ENCODE measurements at regions of chr17 and their contacts with region 1.

Region 1: DNA sequence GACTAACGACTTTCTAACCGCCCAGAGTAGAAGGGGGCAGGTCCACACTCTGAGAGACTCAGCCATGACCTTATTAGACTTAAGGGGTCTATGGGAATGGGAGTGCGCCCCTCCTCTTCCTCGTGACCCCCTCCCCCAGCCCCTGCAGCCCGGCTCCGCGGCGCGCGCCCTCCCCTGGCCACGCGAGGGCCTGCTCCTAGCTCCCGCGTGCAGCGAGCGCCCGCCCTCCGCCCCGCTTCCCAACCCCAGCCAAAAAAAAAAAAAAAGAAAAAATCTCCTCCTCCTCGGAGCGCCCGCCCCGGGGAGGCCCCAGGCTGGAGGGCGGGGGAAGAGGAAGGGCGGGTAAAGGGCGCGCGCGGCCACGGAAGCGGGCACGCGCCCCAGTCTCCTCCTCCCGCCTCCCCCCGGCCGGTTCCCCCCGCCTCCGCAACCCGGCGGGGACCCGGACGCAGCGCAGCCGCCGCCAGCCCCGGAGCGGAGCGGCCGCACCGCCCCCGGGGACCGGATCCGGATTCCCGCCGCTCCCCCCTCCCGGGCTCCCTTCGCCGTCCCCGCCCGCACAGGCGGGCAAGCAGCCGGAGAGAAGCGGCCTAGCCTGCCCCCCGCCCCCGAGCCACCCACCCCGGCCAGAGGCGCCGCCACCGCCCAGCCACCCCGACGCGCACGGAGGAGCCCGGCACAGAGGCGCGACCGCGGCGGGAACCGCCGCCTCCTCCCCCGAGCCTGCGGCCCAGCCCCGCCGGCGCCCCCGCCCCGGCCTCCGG is 949 bp downstream of the UBTF start:
- DNase-seq: peak; percentile 77 to 97
- H3K4me3 ChIP-seq: peak overlapping the region; percentile 92
- CTCF ChIP-seq: peak in 1 of 3 donors; percentile 13
- POLR2A ChIP-seq: peak in 1 of 2 donors; percentile 59

Region 2: DNA sequence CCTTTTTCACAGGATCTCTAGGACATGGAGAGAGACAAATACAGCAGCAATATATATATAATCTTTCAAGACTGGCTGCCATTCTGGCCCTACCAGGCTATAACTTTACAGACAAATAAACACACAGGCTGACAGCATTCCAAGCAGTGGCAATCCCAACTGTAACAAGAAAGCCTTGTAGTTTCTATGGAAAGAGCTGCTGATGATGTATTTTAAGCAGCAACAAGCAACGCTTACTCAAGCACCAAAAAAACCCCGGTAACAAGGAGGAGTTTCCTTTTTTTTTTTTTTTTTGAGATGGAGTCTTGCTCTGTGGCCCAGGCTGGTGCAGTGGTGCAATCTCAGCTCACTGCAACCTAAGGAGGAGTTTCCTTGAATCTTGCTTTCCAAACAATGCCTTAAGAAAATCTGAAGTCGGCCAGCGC is 175.2 kb before region 1 on chr17:
- intact Hi-C with region 1: no loop called
- DNase-seq: no peak
- H3K4me3 ChIP-seq: no peak overlapping the region
- CTCF ChIP-seq: no peak
- POLR2A ChIP-seq: no peak

Region 3: GRCh38 chr17:44324571-44325275 is 106.2 kb after region 1 on chr17 and contains the start of gene SLC25A39:
- intact Hi-C with region 1: loop called (anchors 5 kb)
- DNase-seq: peak; percentile 90 to 99
- H3K4me3 ChIP-seq: peak within 1 kb of the TSS; percentile 74
- CTCF ChIP-seq: no peak
- POLR2A ChIP-seq: no peak
- total RNA-seq, gene SLC25A39: 73.4 to 113 (median 90.0) TPM

Region 4: DNA sequence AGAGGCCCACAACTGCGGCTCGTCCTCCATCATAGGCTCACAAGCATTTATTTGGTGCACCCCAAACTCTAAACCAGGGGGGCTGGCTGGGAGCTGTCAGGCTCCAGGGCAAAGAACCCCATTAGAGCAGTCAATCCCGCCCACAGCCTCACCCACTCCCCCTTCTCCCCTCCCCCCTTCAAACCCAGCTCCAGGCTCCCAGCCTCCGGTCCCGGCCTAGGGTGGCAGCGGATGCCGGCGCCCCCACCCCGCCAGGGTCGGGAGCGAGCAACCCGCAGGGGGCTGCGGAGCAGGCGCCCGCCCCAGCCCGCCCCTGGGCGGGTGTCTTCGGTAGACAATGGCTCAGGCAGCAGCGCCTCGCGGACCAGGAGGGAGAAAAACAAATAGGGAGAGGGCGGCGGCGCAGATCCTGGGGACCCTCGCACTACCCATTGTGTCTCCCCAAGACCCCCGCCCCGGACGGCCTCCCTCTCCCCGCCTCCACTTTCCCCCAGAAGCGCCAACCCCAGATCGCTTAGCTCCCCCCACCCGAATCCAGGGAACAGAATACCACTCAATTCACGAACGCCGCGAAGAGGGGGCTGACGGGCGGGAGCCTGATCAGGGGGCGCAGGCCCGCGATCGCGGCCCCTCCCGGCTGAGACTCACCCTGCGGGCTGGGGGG is 144.6 kb after region 1 on chr17:
- intact Hi-C with region 1: loop called (anchors 1 kb)
- DNase-seq: no peak
- H3K4me3 ChIP-seq: peak overlapping the region; percentile 37
- CTCF ChIP-seq: no peak
- POLR2A ChIP-seq: no peak